ENCODE measurements at regions of chr17 and their contacts with region 1.

Region 1: DNA sequence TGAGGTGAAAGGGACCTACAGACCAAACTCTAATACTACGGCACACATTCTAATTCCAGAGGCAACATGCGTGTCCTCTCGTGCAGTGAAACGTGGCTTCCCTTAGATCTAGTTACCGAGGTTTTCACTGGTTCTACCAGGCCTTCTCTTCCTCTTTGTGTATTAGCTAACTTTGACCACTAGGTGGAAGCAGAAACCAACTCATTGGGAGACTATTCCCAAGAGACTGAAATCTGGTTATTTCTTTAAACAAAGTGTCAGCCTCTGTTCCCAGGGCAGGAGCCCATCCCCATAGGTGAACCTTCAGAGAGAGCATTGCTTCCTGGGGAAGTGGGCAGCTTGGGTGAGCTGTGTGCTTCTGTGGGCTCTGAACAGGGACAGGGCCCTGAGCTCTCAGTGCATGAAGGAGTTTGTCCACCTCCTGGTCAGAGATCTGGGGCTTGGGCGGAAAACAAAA is 19.7 kb upstream of the RCVRN start:
- DNase-seq: peak in 6 of 9 donors; percentile 7 to 56 (median 41)
- ATAC-seq: peak; percentile 72
- H3K4me3 ChIP-seq: no peak overlapping the region
- H3K4me3 Mint-ChIP-seq: peak overlapping the region in 1 of 10 donors; percentile 26
- H3K27ac ChIP-seq: no peak overlapping the region
- H3K27ac Mint-ChIP-seq: peak overlapping the region in 1 of 9 donors; percentile 38
- H3K4me1 ChIP-seq: no peaks in the 10 kb centered on the region
- H3K4me1 Mint-ChIP-seq: peaks cover 0 to 5% (median 0%) of the 10 kb centered on the region in 7 donors
- H3K27me3 ChIP-seq: no peaks in the 10 kb centered on the region
- H3K27me3 Mint-ChIP-seq: no peaks in the 10 kb centered on the region

Region 2: DNA sequence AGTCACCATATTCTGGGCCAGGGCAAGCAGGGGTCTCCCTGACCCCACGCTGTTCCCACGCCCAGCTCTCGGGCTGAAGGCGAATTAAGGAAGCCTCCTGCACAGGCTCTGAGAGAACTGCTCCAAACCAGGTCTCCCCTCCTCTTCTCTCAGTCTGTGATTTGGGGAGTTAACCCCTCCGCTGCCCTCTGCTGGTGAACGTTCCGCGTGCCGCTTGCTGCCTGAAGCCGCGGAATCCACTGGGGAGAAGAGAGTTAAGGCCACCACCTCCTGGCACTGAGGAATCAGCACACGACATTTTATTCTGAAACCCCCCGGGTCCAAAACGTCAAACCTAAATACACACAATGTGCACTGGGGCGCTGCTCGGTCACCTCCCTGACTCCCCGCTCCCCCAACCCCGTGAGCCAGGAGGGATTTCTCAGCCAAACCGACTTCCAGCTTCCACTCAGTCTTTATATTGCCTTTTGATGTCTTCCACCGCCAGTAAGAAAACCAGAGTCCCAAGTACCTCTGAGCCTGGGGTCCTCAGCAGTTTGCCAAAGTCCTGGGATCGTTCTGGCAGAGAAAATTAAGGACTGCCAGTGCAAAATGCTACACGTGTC is 34.7 kb after region 1 on chr17:
- CTCF ChIA-PET with region 1: interaction called, 3 read pairs
- POLR2A ChIA-PET with region 1: no interaction called
- intact Hi-C with region 1: loop called in 1 of 2 experiments (anchors 1 kb)
- DNase-seq: peak in 2 of 9 donors; percentile 5 to 23
- ATAC-seq: no peak
- H3K4me3 ChIP-seq: no peak overlapping the region
- H3K4me3 Mint-ChIP-seq: no peak overlapping the region
- H3K27ac ChIP-seq: no peak overlapping the region
- H3K27ac Mint-ChIP-seq: no peak overlapping the region
- H3K4me1 ChIP-seq: no peaks in the 10 kb centered on the region
- H3K4me1 Mint-ChIP-seq: peaks cover 0 to 4% (median 0%) of the 10 kb centered on the region in 7 donors
- H3K27me3 ChIP-seq: no peaks in the 10 kb centered on the region
- H3K27me3 Mint-ChIP-seq: peaks cover 0 to 11% (median 4%) of the 10 kb centered on the region in 5 donors

Region 3: GRCh38 chr17:10357768-10358167 is 433.0 kb after region 1 on chr17:
- CTCF ChIA-PET with region 1: no interaction called
- POLR2A ChIA-PET with region 1: no interaction called
- intact Hi-C with region 1: loop called in 1 of 2 experiments (anchors 10 kb)
- DNase-seq: no peak
- ATAC-seq: no peak
- H3K4me3 ChIP-seq: no peak overlapping the region
- H3K4me3 Mint-ChIP-seq: no peak overlapping the region
- H3K27ac ChIP-seq: no peak overlapping the region
- H3K27ac Mint-ChIP-seq: no peak overlapping the region
- H3K4me1 ChIP-seq: no peaks in the 10 kb centered on the region
- H3K4me1 Mint-ChIP-seq: no peaks in the 10 kb centered on the region
- H3K27me3 ChIP-seq: no peaks in the 10 kb centered on the region
- H3K27me3 Mint-ChIP-seq: peaks cover 0 to 4% (median 0%) of the 10 kb centered on the region in 5 donors